AG04450 (cell line): ENCODE measurements at regions of chr11 and their contacts with region 1.

Region 1: GRCh38 chr11:6667733-6668374 is 12.2 kb upstream of the DCHS1 start:
- DNase-seq: no peak
- H3K4me3 ChIP-seq: no peak overlapping the region
- H3K27ac ChIP-seq: no peak overlapping the region
- H3K27me3 ChIP-seq: no peaks in the 10 kb centered on the region
- CTCF ChIP-seq: peak; percentile 53

Region 2: DNA sequence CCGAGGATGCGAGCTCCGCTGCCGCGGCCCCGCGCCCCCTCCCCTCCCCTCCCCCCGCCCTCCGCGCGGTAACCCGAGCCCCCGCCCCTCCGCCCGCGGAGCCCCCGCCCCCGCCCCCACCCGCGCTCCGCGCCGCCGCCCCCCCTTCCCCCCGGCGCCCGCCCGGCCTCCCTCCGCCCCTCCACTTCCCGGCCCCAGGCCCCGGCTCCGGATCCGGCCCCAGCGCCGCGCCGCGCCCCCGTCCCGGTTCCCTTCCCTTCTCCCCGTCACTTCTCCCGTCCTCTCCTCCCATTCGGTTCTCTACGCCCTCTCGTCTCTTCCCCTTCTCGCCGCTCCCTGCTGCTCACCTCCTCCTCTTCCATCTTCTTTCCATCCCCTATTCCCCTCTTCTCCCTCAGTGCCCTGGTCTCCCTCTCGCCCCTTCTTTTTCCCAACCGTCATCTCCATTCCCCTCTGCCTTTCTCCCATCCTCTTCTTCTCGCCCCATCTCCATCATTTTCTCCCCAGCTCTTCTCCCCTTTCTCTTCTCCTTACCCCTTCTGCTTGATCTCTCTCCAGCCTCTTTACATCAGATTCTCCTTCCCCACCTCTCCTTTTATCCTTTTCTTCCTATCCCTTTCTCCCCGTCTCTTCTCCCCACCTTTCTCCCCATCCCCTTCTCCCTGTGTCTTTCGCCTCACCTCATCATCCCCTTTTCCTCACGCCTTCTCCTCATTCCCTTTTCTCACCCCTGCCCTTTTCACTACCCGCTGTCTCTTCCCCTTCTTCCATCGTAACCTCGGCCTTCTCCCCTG is 11.9 kb before region 1 on chr11 and contains the start of gene DCHS1:
- CTCF ChIA-PET with region 1: interaction called, 23 read pairs
- POLR2A ChIA-PET with region 1: no interaction called
- DNase-seq: no peak
- H3K4me3 ChIP-seq: peak within 1 kb of the TSS; percentile 71
- H3K27ac ChIP-seq: no peak within 1 kb of the TSS
- H3K27me3 ChIP-seq: peaks cover 14% of the 10 kb centered on the region
- CTCF ChIP-seq: no peak
- polyA plus RNA-seq, gene DCHS1: 8.7 and 11.2 TPM in 2 replicates